Activated CD4-positive, alpha-beta T cell treated with anti-CD3 and anti-CD28 coated beads, Interleukin-2, amount 10 ng/mL, durations not matched to agents 24 days and 14 days (primary cell): ENCODE measurements at regions of chr7 and their contacts with region 1.

Region 1: DNA sequence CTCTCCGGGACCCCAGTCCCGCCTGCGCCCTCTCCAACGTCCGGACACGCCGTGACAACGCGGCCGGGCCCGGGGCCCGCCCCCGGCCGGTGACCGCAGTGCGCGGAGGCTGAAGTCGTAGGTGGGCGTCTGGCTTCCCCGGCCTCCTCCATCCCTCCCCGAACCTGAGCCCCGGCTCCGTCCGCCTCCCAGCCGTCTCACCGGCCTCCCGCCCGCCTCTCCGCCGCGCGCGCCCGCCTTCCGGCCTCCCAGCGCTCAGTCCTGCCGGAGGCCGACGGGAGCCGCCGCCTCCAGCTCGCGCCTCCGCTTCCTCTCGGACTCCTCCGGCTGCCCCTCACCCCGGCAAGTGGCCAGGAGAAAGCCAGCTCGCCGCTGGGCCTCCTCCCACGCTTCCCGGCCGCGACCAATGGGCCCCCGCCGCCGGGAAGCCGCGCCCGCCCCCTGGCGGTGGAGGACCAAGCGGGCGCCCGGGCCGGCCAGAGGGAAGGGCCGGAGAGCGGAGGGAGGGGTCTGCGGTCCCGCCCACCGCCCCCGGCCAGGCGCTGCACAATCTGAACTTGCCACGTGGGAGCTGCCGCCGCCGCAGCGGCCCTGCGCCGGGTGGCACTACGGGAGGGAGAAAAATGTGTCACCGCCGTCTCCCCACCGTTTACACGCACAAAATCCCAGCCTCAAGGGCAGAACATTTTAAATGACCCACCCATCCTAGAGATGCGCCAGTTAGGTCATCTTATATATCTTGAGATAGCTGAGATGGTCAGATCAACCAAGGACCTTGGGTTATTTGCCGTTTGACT is at the start of gene FAM3C:
- DNase-seq: peak; percentile 95
- H3K4me3 Mint-ChIP-seq: peak within 1 kb of the TSS; percentile 88
- H3K27ac Mint-ChIP-seq: peak within 1 kb of the TSS; percentile 96
- H3K4me1 Mint-ChIP-seq: peaks cover 33% of the 10 kb centered on the region
- H3K27me3 Mint-ChIP-seq: no peaks in the 10 kb centered on the region
- total RNA-seq, gene FAM3C: 77.5 and 80.2 TPM in 2 replicates

Region 2: GRCh38 chr7:121278120-121279021 is 117.8 kb before region 1 on chr7:
- intact Hi-C with region 1: loop called (anchors 5 kb)
- DNase-seq: no peak
- H3K4me3 Mint-ChIP-seq: peak overlapping the region; percentile 29
- H3K27ac Mint-ChIP-seq: peak overlapping the region; percentile 70
- H3K4me1 Mint-ChIP-seq: peaks cover 19% of the 10 kb centered on the region
- H3K27me3 Mint-ChIP-seq: peaks cover 18% of the 10 kb centered on the region

Region 3: DNA sequence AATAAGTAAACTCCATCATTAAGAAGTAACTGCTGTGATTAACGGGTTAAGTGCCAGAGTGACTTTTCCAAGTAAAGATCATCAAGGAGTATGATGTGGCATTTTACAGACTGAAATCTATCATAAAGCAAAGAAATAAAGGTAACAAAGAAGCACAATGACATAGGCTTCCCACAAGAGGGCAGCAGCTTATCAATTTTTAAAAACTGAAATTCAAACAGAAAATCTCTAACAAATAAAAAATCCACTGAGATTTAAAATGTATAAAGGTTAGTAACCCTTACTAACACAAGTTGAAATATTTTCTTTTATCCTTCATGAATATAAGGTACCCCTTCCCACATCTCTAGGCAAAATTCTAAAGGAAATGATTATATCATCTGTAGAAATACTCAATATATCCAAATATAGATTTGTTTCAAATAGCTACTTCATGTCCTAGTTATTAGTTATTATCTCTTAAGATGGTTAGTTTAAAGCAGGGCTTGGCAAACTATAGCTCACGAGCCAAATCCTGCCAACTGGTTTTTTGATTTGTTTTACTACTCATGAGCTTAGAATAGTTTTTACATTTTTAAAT is 29.2 kb before region 1 on chr7:
- intact Hi-C with region 1: loop called (anchors 1 kb)
- DNase-seq: peak; percentile 74
- H3K4me3 Mint-ChIP-seq: no peak overlapping the region
- H3K27ac Mint-ChIP-seq: peak overlapping the region; percentile 59
- H3K4me1 Mint-ChIP-seq: peaks cover 39% of the 10 kb centered on the region
- H3K27me3 Mint-ChIP-seq: no peaks in the 10 kb centered on the region

Region 4: GRCh38 chr7:121372376-121373010 is 23.7 kb before region 1 on chr7:
- intact Hi-C with region 1: loop called (anchors 1 kb)
- DNase-seq: no peak
- H3K4me3 Mint-ChIP-seq: peak overlapping the region; percentile 61
- H3K27ac Mint-ChIP-seq: peak overlapping the region; percentile 79
- H3K4me1 Mint-ChIP-seq: peaks cover 41% of the 10 kb centered on the region
- H3K27me3 Mint-ChIP-seq: no peaks in the 10 kb centered on the region

Region 5: GRCh38 chr7:121385800-121386179 is 10.4 kb before region 1 on chr7:
- intact Hi-C with region 1: loop called (anchors 1 kb)
- DNase-seq: no peak
- H3K4me3 Mint-ChIP-seq: peak overlapping the region; percentile 16
- H3K27ac Mint-ChIP-seq: no peak overlapping the region
- H3K4me1 Mint-ChIP-seq: peaks cover 67% of the 10 kb centered on the region
- H3K27me3 Mint-ChIP-seq: no peaks in the 10 kb centered on the region

Region 6: GRCh38 chr7:121437456-121438127 is 41.4 kb after region 1 on chr7:
- intact Hi-C with region 1: loop called (anchors 1 kb)
- DNase-seq: no peak
- H3K4me3 Mint-ChIP-seq: peak overlapping the region; percentile 73
- H3K27ac Mint-ChIP-seq: peak overlapping the region; percentile 92
- H3K4me1 Mint-ChIP-seq: peaks cover 36% of the 10 kb centered on the region
- H3K27me3 Mint-ChIP-seq: no peaks in the 10 kb centered on the region

Region 7: GRCh38 chr7:121530227-121531174 is 134.3 kb after region 1 on chr7:
- intact Hi-C with region 1: loop called (anchors 1 kb)
- DNase-seq: peak; percentile 89
- H3K4me3 Mint-ChIP-seq: peak overlapping the region; percentile 63
- H3K27ac Mint-ChIP-seq: peak overlapping the region; percentile 96
- H3K4me1 Mint-ChIP-seq: peaks cover 47% of the 10 kb centered on the region
- H3K27me3 Mint-ChIP-seq: no peaks in the 10 kb centered on the region